Activated CD4-positive, alpha-beta T cell treated with anti-CD3 and anti-CD28 coated beads for 36 hours (primary cell): ENCODE measurements at regions of chr1 and their contacts with region 1.

Region 1: GRCh38 chr1:66624412-66625060 is 90.6 kb downstream of the SGIP1 start:
- DNase-seq: no peak
- ATAC-seq: peak; percentile 83
- H3K4me3 Mint-ChIP-seq: no peak overlapping the region
- H3K27ac Mint-ChIP-seq: peak overlapping the region; percentile 44
- H3K4me1 Mint-ChIP-seq: peaks cover 15% of the 10 kb centered on the region
- H3K27me3 Mint-ChIP-seq: peaks cover 3% of the 10 kb centered on the region

Region 2: GRCh38 chr1:66575739-66576138 is 48.8 kb before region 1 on chr1:
- CTCF ChIA-PET with region 1: no interaction called
- POLR2A ChIA-PET with region 1: no interaction called
- intact Hi-C with region 1: loop called in 1 of 2 experiments (anchors 5 kb)
- DNase-seq: no peak
- ATAC-seq: no peak
- H3K4me3 Mint-ChIP-seq: no peak overlapping the region
- H3K27ac Mint-ChIP-seq: no peak overlapping the region
- H3K4me1 Mint-ChIP-seq: no peaks in the 10 kb centered on the region
- H3K27me3 Mint-ChIP-seq: peaks cover 15% of the 10 kb centered on the region

Region 3: GRCh38 chr1:66642992-66643391 is 18.5 kb after region 1 on chr1:
- CTCF ChIA-PET with region 1: no interaction called
- POLR2A ChIA-PET with region 1: no interaction called
- intact Hi-C with region 1: no loop called
- DNase-seq: no peak
- ATAC-seq: no peak
- H3K4me3 Mint-ChIP-seq: no peak overlapping the region
- H3K27ac Mint-ChIP-seq: no peak overlapping the region
- H3K4me1 Mint-ChIP-seq: no peaks in the 10 kb centered on the region
- H3K27me3 Mint-ChIP-seq: peaks cover 5% of the 10 kb centered on the region

Region 4: DNA sequence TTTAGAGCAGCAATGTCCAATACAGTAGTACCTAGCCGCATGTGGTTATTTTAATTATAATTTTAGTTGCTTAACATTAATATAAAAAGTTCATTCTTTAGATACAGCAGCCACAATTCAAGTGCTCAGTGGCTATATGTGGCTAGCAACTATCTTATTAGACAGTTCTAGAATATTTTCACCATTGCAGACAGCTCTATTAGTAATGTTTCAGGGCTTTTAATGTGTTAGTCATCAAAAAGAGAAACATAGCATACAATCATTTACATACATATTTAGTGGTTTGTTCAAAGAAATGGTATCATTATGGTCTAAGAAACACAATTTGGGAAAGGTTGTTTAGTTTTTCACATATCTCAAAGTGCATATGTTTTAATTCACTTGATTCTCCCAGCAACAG is 61.1 kb after region 1 on chr1:
- CTCF ChIA-PET with region 1: no interaction called
- POLR2A ChIA-PET with region 1: no interaction called
- intact Hi-C with region 1: no loop called
- DNase-seq: no peak
- ATAC-seq: no peak
- H3K4me3 Mint-ChIP-seq: no peak overlapping the region
- H3K27ac Mint-ChIP-seq: no peak overlapping the region
- H3K4me1 Mint-ChIP-seq: no peaks in the 10 kb centered on the region
- H3K27me3 Mint-ChIP-seq: peaks cover 4% of the 10 kb centered on the region